ENCODE measurements at regions of chr15 and their contacts with region 1.

Region 1: DNA sequence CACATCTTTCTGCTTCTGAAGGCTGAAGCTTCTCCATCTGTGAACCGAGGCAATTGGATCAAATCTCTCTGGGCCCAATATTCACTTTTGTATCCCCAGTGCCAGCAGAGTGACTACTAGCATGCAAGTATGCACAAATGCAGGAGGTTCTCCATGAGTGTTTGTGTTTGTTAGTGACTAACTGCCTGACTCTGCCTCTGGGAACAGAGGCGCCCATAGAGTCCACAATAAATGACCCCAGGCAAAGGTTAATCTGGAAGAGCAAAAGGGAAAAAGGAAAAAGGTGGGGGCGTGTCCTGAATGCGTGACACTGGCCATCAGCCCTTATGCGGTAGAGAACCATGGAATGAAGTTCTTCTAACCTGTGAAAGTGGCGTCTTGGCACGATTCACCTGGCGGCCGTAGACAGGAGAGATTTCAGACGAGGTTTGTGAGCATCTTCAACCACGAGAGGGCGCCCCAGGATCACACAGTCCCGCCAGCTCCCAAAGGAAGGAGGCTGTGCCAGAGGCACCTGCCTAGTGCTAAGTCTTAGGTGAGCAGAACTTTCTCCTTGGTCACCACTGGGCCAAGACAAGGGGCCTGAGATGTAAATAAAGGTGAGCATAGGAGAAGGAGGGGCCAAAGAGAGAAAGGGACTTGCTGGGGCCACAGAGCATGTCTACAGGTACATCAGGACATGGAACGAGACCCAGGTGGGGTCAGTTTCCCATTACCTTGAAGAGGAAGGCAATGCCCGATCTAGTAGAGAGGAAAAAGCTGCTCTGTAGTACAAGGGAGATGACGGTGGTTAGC is 44.2 kb downstream of the RBPMS2 start:
- DNase-seq: peak; percentile 87
- H3K4me3 Mint-ChIP-seq: no peak overlapping the region
- H3K27ac Mint-ChIP-seq: no peak overlapping the region
- H3K4me1 Mint-ChIP-seq: peaks cover 8% of the 10 kb centered on the region
- H3K27me3 Mint-ChIP-seq: peaks cover 2% of the 10 kb centered on the region

Region 2: DNA sequence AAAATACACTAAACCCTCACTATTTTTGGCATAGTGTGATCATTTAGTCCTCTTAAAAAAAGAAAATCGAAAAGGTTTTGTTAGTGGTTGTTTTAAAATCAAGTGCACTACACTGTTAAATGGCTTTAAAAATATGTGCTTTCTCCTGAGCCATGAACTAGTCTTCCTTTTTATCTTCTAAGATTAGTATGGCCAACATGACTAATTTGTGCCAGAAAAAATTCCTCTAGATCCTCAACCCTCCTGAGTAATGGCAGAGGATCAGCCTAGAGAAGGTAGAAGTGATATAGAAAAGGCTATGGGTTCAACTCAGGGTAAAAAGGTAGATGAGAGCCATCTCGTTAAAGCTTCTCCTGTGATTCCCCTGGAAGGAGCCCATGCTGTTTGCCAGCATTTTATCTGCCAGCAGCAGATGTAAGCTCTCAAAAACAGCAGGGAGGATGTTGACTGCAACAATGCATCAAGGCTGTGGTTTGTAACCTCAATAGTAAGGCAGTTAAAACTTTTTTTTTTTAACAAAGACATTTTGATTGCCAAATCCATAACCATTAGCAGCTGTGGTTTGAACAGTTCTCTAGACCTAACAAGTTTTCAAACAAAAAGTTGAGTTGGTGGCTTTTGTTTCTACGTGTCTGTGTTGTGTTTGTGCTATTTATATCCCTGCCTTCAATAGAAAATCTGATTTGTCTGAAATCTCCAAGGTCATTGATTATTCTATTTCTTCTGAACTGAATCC is 301.0 kb before region 1 on chr15:
- CTCF ChIA-PET with region 1: interaction called, 14 read pairs
- POLR2A ChIA-PET with region 1: no interaction called
- DNase-seq: peak; percentile 57
- H3K4me3 Mint-ChIP-seq: peak overlapping the region; percentile 31
- H3K27ac Mint-ChIP-seq: peak overlapping the region; percentile 90
- H3K4me1 Mint-ChIP-seq: peaks cover 37% of the 10 kb centered on the region
- H3K27me3 Mint-ChIP-seq: no peaks in the 10 kb centered on the region

Region 3: GRCh38 chr15:64681424-64682024 is 49.7 kb before region 1 on chr15:
- CTCF ChIA-PET with region 1: interaction called, 107 read pairs
- POLR2A ChIA-PET with region 1: interaction called, 5 read pairs
- DNase-seq: no peak
- H3K4me3 Mint-ChIP-seq: no peak overlapping the region
- H3K27ac Mint-ChIP-seq: no peak overlapping the region
- H3K4me1 Mint-ChIP-seq: no peaks in the 10 kb centered on the region
- H3K27me3 Mint-ChIP-seq: no peaks in the 10 kb centered on the region

Region 4: DNA sequence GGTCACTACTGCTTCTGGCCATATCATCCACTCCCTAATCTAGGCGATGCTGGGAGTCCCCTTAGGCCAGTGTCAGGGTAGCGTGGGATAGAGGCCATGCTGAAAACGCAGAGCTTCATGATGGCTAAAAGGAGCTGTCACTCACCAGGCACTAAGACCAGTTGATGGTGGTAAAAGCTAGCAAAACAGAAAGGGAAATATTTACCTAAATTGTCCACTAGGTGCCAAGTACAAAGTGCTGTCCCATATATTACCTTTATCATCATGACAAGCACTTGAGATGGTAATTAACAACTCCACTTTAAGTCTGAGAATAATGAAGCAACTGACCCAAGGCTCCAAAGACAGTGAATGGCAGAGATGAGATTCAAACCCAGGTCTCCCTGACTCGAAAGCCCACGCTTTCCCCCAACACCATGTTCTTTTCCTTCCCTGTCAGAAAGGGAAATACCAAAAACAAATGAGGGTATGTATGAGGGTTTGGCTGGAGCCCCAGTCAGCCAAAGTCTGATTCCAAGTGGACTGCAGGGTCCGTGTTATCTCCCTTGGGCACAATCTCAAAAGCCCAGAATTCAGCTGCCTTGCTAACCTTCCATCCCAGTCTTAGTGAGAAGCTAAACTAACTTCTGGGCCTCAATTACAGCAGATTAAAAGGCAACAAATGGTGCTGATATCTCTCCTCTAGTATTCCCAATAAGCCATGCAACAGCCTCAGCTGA is 40.5 kb before region 1 on chr15:
- CTCF ChIA-PET with region 1: interaction called, 107 read pairs
- POLR2A ChIA-PET with region 1: interaction called, 5 read pairs
- DNase-seq: no peak
- H3K4me3 Mint-ChIP-seq: no peak overlapping the region
- H3K27ac Mint-ChIP-seq: no peak overlapping the region
- H3K4me1 Mint-ChIP-seq: peaks cover 5% of the 10 kb centered on the region
- H3K27me3 Mint-ChIP-seq: no peaks in the 10 kb centered on the region

Region 5: GRCh38 chr15:64697911-64698369 is 33.3 kb before region 1 on chr15:
- CTCF ChIA-PET with region 1: interaction called, 10 read pairs
- POLR2A ChIA-PET with region 1: no interaction called
- DNase-seq: no peak
- H3K4me3 Mint-ChIP-seq: no peak overlapping the region
- H3K27ac Mint-ChIP-seq: peak overlapping the region; percentile 8
- H3K4me1 Mint-ChIP-seq: peaks cover 57% of the 10 kb centered on the region
- H3K27me3 Mint-ChIP-seq: no peaks in the 10 kb centered on the region

Region 6: GRCh38 chr15:64809649-64810496 is 78.7 kb after region 1 on chr15:
- CTCF ChIA-PET with region 1: interaction called, 52 read pairs
- POLR2A ChIA-PET with region 1: interaction called, 6 read pairs
- DNase-seq: peak; percentile 76
- H3K4me3 Mint-ChIP-seq: no peak overlapping the region
- H3K27ac Mint-ChIP-seq: no peak overlapping the region
- H3K4me1 Mint-ChIP-seq: peaks cover 2% of the 10 kb centered on the region
- H3K27me3 Mint-ChIP-seq: peaks cover 8% of the 10 kb centered on the region